PC-3 (cell line): ENCODE measurements at regions of chr4 and their contacts with region 1.

Region 1: GRCh38 chr4:158172261-158173258 is at the start of gene GASK1B:
- DNase-seq: peak; percentile 70
- ATAC-seq: peak; percentile 10; the same call in 1 of the 2 replicates
- H3K4me3 ChIP-seq: peak within 1 kb of the TSS; percentile 66
- H3K27ac ChIP-seq: no peak within 1 kb of the TSS
- H3K4me1 ChIP-seq: peaks cover 28% of the 10 kb centered on the region
- H3K27me3 ChIP-seq: no peaks in the 10 kb centered on the region
- CTCF ChIP-seq: peak; percentile 78
- total RNA-seq, gene GASK1B: 0.46 and 0.51 TPM in 2 replicates

Region 2: GRCh38 chr4:157220371-157220881 is 952.1 kb before region 1 on chr4 and contains the start of gene GRIA2:
- CTCF ChIA-PET with region 1: no interaction called
- POLR2A ChIA-PET with region 1: no interaction called
- intact Hi-C with region 1: loop called (anchors 10 kb)
- DNase-seq: no peak
- ATAC-seq: no peak
- H3K4me3 ChIP-seq: no peak within 1 kb of the TSS
- H3K27ac ChIP-seq: no peak within 1 kb of the TSS
- H3K4me1 ChIP-seq: no peaks in the 10 kb centered on the region
- H3K27me3 ChIP-seq: peaks cover 10% of the 10 kb centered on the region; the same call in 1 of the 2 replicates
- CTCF ChIP-seq: no peak
- total RNA-seq, gene GRIA2: not detected in 2 replicates

Region 3: DNA sequence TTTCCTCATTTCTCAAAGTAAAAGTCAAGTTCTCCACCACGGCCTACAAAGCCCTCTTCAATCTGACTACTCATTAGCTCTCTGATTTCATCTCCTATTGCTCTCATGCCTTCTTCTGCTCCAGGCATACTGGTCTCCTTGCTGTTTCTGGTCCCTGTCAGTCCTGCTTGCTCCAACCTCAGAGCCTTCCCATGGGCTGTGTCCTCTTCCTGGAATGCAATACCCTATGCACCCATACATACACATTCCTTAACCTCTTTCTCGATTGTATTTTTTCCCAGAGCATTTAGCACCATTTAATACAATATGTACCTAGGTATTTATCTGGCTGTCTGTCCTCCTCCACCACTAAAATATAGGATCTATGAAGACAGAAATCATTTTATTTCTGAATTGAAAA is 384.9 kb before region 1 on chr4:
- CTCF ChIA-PET with region 1: no interaction called
- POLR2A ChIA-PET with region 1: no interaction called
- intact Hi-C with region 1: no loop called
- DNase-seq: no peak
- ATAC-seq: peak; percentile 79
- H3K4me3 ChIP-seq: no peak overlapping the region
- H3K27ac ChIP-seq: no peak overlapping the region
- H3K4me1 ChIP-seq: no peaks in the 10 kb centered on the region
- H3K27me3 ChIP-seq: no peaks in the 10 kb centered on the region
- CTCF ChIP-seq: no peak

Region 4: DNA sequence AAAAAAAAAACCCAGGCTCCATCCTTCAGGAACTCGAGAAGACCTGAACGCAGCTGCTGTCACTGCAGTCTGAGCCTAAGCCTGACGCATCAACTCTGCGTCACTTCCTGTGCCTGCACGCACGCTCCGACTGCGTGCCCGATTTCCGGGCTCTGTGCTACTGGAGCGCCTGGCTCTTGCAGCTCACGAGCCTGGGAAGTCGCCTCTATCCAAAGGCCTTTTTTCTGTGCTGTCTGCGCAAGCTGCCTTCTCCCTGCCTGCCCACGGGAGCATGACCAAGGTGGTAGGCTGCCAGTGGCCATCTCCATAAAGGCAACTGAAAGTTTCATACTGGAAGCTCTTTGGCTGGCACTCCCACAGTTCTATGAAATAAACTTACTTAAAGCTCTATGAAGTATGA is 10.2 kb after region 1 on chr4:
- CTCF ChIA-PET with region 1: no interaction called
- POLR2A ChIA-PET with region 1: no interaction called
- intact Hi-C with region 1: no loop called
- DNase-seq: no peak
- ATAC-seq: no peak
- H3K4me3 ChIP-seq: no peak overlapping the region
- H3K27ac ChIP-seq: no peak overlapping the region
- H3K4me1 ChIP-seq: no peaks in the 10 kb centered on the region
- H3K27me3 ChIP-seq: no peaks in the 10 kb centered on the region
- CTCF ChIP-seq: no peak

Region 5: DNA sequence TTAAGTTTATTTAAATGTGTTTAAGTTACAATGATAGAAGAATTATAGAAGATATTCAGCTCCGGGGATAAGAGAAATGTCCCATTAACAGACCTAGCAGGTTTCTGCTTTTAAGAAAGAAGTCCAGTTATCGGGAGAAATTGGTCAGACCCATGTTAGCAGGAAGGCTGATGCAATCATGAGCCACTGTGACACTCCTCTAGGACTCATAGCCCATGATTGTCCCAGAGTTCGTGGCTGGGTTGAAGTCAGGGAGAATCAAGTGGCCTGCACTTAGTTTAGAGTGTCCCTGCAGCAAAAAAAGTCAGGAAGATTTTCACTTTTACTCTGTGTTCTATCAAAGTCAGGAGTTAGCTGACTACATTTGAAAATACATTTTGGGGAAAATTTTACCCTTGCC is 109.7 kb after region 1 on chr4:
- CTCF ChIA-PET with region 1: no interaction called
- POLR2A ChIA-PET with region 1: no interaction called
- intact Hi-C with region 1: no loop called
- DNase-seq: peak; percentile 42
- ATAC-seq: peak; percentile 43; the same call in 1 of the 2 replicates
- H3K4me3 ChIP-seq: no peak overlapping the region
- H3K27ac ChIP-seq: no peak overlapping the region
- H3K4me1 ChIP-seq: no peaks in the 10 kb centered on the region; the same call in 1 of the 2 replicates
- H3K27me3 ChIP-seq: no peaks in the 10 kb centered on the region
- CTCF ChIP-seq: no peak